ENCODE measurements at regions of chr9 and their contacts with region 1.

Region 1: GRCh38 chr9:128771745-128772519 is at the start of gene ZER1:
- DNase-seq: peak; percentile 89
- H3K4me3 Mint-ChIP-seq: peak within 1 kb of the TSS; percentile 97
- H3K27ac Mint-ChIP-seq: peak within 1 kb of the TSS; percentile 92
- H3K4me1 Mint-ChIP-seq: peaks cover 13% of the 10 kb centered on the region
- H3K27me3 Mint-ChIP-seq: no peaks in the 10 kb centered on the region
- total RNA-seq, gene ZER1: 18.6 and 18.7 TPM in 2 replicates

Region 2: DNA sequence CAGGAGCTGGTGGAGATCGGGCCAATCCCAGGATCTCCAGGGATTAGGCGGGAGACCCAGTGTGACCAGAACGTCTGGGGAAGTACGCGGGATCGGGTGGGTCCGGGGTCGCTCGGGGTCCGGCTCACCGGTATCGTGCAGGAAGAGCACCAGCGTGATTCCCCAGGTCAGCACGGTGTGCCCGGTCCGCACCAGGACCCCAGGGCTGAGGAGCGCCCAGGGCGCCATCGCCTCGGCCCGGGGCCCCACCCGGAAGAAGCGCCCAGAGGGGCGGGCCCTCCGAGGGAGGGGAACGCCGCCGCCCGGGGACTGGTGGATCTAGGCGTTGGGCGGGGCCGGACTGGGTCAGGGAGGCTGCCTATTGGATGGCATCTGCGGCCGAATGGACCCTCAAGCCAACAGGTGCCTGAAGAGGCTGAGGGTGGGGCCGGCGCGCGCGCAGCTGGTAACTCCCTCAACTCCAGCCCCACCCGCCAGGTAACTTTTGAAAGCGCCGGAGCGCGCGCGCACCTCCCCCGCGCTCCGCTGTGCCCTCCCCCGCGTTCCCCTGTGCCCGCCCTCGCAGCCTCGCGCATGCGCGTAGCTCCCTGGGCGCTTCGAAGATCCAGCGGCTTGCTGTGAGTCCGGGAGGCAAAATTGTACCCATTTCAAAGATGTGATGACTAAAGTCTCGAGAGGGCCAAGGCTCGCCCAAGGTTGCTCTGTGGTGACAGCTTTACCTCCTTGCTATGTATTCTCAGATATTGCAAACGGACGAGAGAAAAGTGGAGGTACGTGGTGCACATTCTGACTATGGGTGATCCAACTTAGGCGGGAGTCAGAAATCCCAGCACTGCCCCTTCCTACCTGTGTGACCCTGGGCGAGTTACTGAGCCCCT is 47.8 kb before region 1 on chr9 and contains the start of gene ZDHHC12:
- intact Hi-C with region 1: loop called (anchors 1 kb)
- DNase-seq: peak; percentile 99
- H3K4me3 Mint-ChIP-seq: peak within 1 kb of the TSS; percentile 98
- H3K27ac Mint-ChIP-seq: peak within 1 kb of the TSS; percentile 90
- H3K4me1 Mint-ChIP-seq: peaks cover 35% of the 10 kb centered on the region
- H3K27me3 Mint-ChIP-seq: no peaks in the 10 kb centered on the region
- total RNA-seq, gene ZDHHC12: 51.7 and 53.2 TPM in 2 replicates

Region 3: DNA sequence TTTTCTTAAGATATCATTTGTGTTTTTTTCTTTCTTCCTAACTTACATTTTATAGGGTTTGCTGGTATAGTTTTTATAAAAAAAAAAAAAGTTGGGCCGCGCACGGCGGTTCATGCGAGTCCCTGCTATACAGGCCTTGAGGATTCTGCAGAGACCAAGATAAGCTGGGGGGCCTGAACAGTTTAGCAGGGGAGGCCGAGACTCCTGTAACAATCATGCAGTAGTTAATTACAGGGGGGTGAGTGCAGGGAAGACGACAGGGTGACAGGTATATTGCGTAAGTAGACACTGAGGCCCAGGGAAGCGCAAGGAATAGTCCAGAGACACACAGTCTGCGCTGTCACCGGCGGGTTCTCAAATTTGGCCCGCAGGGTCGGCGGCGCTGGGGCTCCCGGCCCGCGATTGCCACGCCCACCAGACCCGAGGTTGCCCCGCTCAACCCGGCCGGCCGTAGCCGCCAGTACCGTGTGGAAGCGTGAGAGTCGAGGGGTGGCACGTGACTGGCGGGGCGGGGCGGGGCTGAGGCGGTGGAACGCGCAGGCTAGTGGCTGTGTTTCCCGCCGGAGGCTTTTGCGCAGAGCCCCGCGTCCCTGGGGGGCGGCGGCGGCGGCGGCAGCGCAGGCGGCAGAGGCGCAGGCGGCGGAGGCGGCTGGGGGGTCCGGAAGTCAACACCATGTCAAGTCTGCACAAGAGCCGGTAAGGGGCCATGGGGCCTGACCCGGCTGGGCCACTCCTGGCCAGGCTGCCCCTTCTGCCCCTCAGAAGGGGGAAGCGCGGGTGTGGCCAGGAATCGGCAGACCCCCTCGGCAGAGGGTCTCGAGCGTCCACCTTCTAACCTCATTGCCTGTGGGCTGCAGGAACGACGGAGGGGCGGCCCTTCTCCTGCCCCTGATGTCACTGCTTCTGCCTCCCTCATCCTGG is 15.0 kb after region 1 on chr9 and contains the start of gene TBC1D13:
- intact Hi-C with region 1: loop called (anchors 1 kb)
- DNase-seq: peak; percentile 86
- H3K4me3 Mint-ChIP-seq: peak within 1 kb of the TSS; percentile 96
- H3K27ac Mint-ChIP-seq: peak within 1 kb of the TSS; percentile 90
- H3K4me1 Mint-ChIP-seq: peaks cover 20% of the 10 kb centered on the region
- H3K27me3 Mint-ChIP-seq: no peaks in the 10 kb centered on the region
- total RNA-seq, gene TBC1D13: 20.5 and 24.2 TPM in 2 replicates

Region 4: GRCh38 chr9:128829477-128830251 is 57.7 kb after region 1 on chr9 and contains the start of gene SPOUT1:
- intact Hi-C with region 1: loop called (anchors 5 kb)
- DNase-seq: peak; percentile 93
- H3K4me3 Mint-ChIP-seq: peak within 1 kb of the TSS; percentile 98
- H3K27ac Mint-ChIP-seq: peak within 1 kb of the TSS; percentile 89
- H3K4me1 Mint-ChIP-seq: peaks cover 16% of the 10 kb centered on the region
- H3K27me3 Mint-ChIP-seq: no peaks in the 10 kb centered on the region
- total RNA-seq, gene SPOUT1: 126 and 127 TPM in 2 replicates

Region 5: DNA sequence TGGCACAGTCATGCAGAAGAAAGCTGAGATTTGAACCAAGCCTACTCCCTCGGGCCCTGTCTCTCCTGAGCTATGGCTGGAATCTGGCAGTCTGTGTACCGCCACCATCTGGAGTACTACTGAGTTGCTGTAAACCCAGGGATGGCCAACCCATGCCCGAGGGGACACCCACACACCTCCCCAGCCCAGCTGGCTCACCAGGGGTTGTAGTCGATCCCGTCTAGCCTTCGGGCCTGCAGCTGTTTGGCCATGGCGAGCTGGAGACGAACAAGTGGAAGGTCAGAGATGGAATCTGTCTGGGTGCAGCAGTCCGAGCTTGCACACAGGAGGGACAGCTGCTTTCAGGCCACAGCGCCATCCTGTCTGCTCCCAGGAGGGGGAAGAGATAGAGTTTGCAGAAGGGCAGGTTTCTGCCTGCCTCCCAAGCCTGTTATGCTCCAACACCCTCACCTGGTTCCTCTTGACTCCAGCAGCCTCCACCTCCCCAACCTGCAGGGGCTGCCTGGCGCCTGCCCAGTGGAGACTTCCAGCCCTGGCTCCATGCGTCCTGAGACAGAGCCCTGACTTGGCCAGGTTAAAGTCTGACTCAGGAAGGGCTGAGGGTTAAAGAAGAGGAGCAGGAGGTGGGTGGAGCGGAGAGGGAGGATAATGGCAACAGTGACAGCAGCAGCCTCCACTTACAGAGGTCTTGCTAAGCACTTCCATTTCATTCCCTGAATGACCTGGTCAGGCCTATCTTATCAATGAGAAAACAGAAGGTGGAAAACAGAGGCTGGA is 73.4 kb after region 1 on chr9:
- intact Hi-C with region 1: no loop called
- DNase-seq: no peak
- H3K4me3 Mint-ChIP-seq: no peak overlapping the region
- H3K27ac Mint-ChIP-seq: no peak overlapping the region
- H3K4me1 Mint-ChIP-seq: no peaks in the 10 kb centered on the region
- H3K27me3 Mint-ChIP-seq: no peaks in the 10 kb centered on the region

Measured in activated T-helper 2 cell treated with anti-CD3 and anti-CD28 coated beads, Interferon-gamma antibody, Interleukin-2, Interleukin-4, amounts not matched to agents 10 μg/mL and 5 μg/mL and 100 μg/mL, durations not matched to agents 14 hours and 24 hours and 36 hours (primary cell).